Activated CD8-positive, alpha-beta memory T cell treated with anti-CD3 and anti-CD28 coated beads, Interleukin-2, amount 10 ng/mL, durations not matched to agents 7 days and 5 days (primary cell): ENCODE measurements at regions of chr12 and their contacts with region 1.

Region 1: DNA sequence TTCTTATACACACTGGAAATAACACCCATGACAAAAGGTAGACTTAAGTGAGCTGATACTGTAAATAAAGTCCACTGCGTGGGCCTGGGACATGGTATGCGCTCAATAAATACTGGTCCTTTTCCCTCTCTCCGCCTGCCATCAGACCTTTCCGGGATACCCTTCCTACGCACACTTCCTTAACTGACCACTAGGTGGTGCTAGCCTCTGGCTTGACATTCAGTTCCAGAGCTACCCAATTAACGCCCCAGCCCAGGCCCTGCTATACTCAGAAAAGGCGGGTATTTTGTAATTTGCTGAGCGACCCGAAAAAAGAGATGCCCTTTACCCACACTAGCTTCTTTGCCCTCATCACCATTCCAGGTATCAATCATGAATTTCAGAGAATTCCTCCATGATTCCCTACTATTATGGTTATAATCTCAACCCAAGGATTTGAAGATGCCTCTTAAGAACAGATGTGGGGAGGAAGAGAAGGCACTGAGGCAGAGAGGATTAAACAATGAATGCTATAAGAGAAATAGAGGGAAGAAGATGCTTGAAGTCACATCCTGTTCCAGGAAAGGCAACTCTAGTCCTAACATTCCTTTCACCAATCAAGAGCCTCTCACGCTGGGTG is 3.9 kb upstream of the LRP1 start:
- DNase-seq: peak; percentile 83
- ATAC-seq: peak; percentile 74
- H3K4me3 Mint-ChIP-seq: no peak overlapping the region
- H3K27ac Mint-ChIP-seq: no peak overlapping the region
- H3K4me1 Mint-ChIP-seq: peaks cover 8% of the 10 kb centered on the region
- H3K27me3 Mint-ChIP-seq: peaks cover 34% of the 10 kb centered on the region

Region 2: GRCh38 chr12:56941299-56942017 is 182.9 kb before region 1 on chr12:
- CTCF ChIA-PET with region 1: no interaction called
- DNase-seq: peak; percentile 64
- ATAC-seq: peak; percentile 89
- H3K4me3 Mint-ChIP-seq: no peak overlapping the region
- H3K27ac Mint-ChIP-seq: peak overlapping the region; percentile 33
- H3K4me1 Mint-ChIP-seq: peaks cover 15% of the 10 kb centered on the region
- H3K27me3 Mint-ChIP-seq: peaks cover 40% of the 10 kb centered on the region

Region 3: GRCh38 chr12:57069523-57069922 is 54.8 kb before region 1 on chr12:
- CTCF ChIA-PET with region 1: interaction called, 12 read pairs
- DNase-seq: peak; percentile 73
- ATAC-seq: peak; percentile 97
- H3K4me3 Mint-ChIP-seq: no peak overlapping the region
- H3K27ac Mint-ChIP-seq: peak overlapping the region; percentile 74
- H3K4me1 Mint-ChIP-seq: peaks cover 48% of the 10 kb centered on the region
- H3K27me3 Mint-ChIP-seq: no peaks in the 10 kb centered on the region

Region 4: DNA sequence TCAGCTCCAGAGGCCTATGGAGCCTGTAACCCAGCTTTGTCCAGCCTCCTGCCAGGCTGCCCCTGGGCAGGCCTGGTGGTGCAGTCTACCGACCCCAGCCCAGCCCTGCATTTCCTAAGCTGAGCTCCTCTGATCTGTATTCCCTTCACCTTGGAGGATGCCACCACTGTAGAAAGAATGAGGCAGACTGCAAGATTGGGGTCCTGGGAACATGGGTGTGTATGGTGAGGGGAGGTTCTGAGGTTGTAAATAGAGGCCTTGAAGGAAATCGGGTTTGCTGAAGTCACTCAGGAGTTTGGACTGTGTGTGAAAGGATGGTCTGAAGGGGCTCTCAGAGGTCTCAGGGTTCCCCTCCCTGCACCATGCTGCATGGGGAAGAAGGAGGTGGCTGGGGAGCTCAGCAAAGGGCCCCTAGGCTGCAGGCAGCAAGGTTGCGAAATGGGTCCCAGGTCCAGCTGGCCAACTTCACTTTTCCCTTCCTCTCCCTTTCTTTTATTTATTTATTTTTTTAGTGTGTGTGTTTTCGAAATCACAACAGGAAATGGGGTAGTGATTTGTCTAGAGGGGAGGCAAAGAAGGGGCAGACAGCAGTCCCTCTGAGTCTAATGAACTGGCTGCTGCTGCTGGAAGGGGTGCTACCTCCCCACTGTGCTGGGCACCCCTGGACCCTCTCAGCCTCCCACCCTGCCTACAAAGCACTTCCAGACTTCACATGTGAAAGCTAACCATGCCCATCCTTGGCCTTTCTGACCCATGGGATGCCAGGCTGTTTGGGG is 24.3 kb after region 1 on chr12:
- CTCF ChIA-PET with region 1: interaction called, 15 read pairs
- DNase-seq: no peak
- ATAC-seq: no peak
- H3K4me3 Mint-ChIP-seq: no peak overlapping the region
- H3K27ac Mint-ChIP-seq: no peak overlapping the region
- H3K4me1 Mint-ChIP-seq: no peaks in the 10 kb centered on the region
- H3K27me3 Mint-ChIP-seq: no peaks in the 10 kb centered on the region

Region 5: DNA sequence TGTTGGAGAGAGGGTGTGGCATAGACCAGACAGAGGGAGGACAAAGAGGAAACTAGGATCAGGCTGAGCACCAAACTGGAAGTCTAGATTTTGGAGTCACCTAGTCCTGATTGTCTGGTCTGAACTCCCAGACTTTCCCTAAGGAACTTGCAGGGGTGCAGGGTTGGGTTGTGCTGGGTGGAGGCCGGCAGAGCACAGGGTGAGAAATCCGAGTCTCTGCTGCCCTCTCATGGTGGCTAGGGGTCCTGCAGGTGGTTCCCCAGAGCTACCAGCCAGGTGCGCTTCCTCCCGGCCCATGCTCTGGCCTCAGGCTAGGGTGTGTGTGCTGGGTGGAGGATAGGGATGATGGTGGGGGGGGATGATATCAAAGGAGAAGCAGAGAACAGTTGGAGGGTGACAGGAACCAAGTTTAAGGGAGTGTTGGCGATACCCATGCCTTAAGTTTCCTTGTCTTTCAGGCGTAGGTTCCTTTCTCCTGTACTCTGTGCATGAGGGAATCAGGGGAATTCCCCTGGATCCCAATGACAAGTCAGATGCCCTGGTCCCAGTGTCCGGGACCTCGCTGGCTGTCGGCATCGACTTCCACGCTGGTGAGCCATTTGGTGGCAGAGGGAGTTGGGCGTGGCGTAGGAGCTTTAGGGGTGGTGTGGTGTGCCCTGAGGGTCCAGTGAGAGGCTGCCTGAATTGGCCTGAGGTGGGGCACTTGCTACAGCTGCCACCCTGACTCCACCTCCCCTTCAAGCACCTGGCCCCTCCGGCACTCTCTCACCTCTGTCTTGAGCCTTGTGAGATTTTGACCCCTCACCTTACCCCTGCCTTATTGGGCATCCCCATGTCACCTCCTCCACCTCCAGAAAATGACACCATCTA is 58.8 kb after region 1 on chr12:
- CTCF ChIA-PET with region 1: interaction called, 74 read pairs
- DNase-seq: peak; percentile 84
- ATAC-seq: peak; percentile 97
- H3K4me3 Mint-ChIP-seq: no peak overlapping the region
- H3K27ac Mint-ChIP-seq: no peak overlapping the region
- H3K4me1 Mint-ChIP-seq: peaks cover 2% of the 10 kb centered on the region
- H3K27me3 Mint-ChIP-seq: no peaks in the 10 kb centered on the region

Region 6: GRCh38 chr12:57229634-57230380 is 105.4 kb after region 1 on chr12 and contains the start of gene SHMT2:
- CTCF ChIA-PET with region 1: interaction called, 10 read pairs
- DNase-seq: peak; percentile 96
- ATAC-seq: peak; percentile 79
- H3K4me3 Mint-ChIP-seq: peak within 1 kb of the TSS; percentile 95
- H3K27ac Mint-ChIP-seq: peak within 1 kb of the TSS; percentile 94
- H3K4me1 Mint-ChIP-seq: peaks cover 52% of the 10 kb centered on the region
- H3K27me3 Mint-ChIP-seq: peaks cover 24% of the 10 kb centered on the region
- total RNA-seq, gene SHMT2: 194 to 357 TPM